Mammary epithelial cell (primary cell): ENCODE measurements at regions of chr16 and their contacts with region 1.

Region 1: DNA sequence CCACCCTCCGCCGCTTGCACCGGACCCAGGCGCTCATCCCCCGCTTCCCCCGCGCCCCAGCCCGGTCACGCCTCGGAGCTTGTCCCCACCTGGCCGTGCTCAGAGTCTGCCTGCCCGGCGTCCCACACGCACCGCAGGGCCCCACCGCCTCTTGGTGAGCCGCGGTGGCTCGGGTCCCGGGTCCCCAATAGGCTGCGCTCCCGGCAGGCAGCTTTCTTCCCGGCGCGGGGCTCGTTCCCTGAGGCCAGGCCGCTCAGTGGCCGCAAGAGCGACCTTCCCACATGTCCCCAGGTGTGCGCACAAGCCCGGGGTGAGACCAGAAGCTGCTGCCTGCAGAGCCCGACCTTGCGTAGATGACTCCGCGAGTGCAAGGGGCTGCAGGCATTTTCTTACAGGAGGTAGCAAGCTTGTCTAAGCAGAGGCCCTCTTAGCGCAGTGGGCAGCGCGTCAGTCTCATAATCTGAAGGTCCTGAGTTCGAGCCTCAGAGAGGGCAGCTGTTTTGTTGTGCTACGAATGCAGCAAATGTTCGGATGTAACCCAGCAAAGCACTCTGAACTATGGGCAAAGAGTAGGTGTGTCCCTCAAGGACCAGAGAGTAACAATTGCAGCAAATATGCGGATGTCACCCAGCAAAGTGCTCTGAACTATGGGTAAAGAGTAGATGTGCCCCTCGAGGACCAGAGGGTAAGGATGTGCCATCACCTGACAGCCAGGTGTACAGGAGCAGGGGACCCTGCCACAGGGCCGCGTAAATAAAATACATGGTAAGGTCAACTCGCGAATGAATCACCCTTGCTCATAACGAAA is 15.6 kb downstream of the TLE7 start:
- DNase-seq: peak; percentile 99
- H3K4me3 ChIP-seq: peak overlapping the region; percentile 36 to 59 (median 48)
- H3K27ac ChIP-seq: no peak overlapping the region
- H3K4me1 ChIP-seq: peaks cover 7% of the 10 kb centered on the region
- H3K27me3 ChIP-seq: no peaks in the 10 kb centered on the region
- CTCF ChIP-seq: no peak

Region 2: DNA sequence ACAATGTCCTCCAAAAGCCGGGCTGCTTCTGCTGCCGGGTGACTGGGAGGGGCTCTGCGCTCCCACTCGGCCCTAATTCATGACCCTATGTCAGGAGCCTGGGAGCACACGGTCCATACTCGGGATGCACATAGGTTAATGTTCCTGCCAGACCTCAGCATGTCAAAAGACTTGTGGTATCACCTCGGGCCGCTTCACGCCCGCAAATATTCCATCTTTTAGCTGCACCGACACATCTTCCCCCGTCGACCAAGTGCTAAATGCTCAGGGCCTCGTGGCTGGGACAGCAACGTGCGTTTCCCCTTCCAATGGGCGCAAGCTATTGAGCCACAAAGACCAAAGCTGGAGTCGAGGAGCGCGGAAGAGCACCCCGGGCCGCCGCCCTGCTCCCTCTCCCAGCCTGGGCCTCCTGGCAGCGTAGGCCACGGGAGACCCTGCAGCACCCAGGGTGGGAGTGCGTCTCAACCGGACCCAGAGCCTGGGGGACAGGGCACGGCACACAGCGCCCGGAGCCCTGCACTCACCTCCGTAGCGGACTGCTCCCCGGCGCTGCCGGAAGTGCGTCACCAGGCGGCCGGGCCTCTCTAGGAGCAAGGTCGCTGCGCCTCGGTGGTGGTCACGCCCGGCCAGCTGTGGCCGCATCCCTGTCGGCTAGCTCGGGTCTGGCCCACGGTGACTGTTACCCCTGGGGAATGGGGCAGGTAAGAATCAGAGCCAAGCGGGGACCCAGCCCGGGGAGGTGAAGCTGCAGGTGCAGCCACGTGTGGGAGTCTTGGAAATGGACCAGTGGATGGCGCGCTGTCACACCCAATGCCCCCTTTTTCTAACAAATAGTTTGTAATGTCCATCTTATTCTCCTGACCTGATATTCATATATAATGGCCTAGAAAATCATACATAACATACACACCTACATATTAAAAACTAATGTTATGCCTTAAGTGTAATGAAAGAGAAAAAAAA is 35.7 kb after region 1 on chr16 and contains the start of gene ZNF23:
- CTCF ChIA-PET with region 1: no interaction called
- dilution Hi-C with region 1: no loop called
- in situ Hi-C with region 1: no loop called
- intact Hi-C with region 1: loop called (anchors 2 kb)
- DNase-seq: peak; percentile 70
- H3K4me3 ChIP-seq: peak within 1 kb of the TSS; percentile 83 to 99 (median 94)
- H3K27ac ChIP-seq: peak within 1 kb of the TSS; percentile 82
- H3K4me1 ChIP-seq: peaks cover 18% of the 10 kb centered on the region
- H3K27me3 ChIP-seq: no peaks in the 10 kb centered on the region
- CTCF ChIP-seq: peak in 1 of 2 donors; percentile 28
- total RNA-seq, gene ZNF23: 6.2 to 16.2 TPM

Region 3: DNA sequence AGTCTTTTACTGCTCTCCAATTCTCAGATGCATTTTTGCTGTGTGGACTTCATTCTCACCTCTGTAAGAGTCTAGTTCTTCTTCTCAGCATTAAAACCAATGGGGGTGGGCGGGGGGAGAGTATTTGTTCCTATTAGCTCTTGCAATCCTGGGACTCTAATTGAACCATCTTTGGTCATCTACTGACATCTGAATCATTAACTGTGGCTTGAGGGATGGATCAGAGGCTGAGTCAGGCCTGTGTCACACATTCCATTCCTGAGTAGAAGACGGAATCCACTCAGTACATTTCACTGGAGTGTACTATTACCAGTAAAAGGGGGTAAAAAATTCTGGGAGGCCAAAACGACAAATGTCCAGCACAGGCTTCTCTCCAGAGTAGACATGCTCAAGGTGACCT is 48.6 kb after region 1 on chr16:
- CTCF ChIA-PET with region 1: no interaction called
- dilution Hi-C with region 1: no loop called
- in situ Hi-C with region 1: no loop called
- intact Hi-C with region 1: no loop called
- DNase-seq: peak; percentile 90
- H3K4me3 ChIP-seq: no peak overlapping the region
- H3K27ac ChIP-seq: peak overlapping the region; percentile 79
- H3K4me1 ChIP-seq: peaks cover 23% of the 10 kb centered on the region
- H3K27me3 ChIP-seq: no peaks in the 10 kb centered on the region
- CTCF ChIP-seq: no peak